ENCODE measurements at regions of chrX and their contacts with region 1.

Region 1: GRCh38 chrX:134369576-134369975 is 90.4 kb upstream of the HPRT1 start:
- DNase-seq: no peak
- ATAC-seq: peak; percentile 51
- H3K4me3 Mint-ChIP-seq: no peak overlapping the region
- H3K27ac Mint-ChIP-seq: peak overlapping the region; percentile 71
- H3K4me1 Mint-ChIP-seq: peaks cover 34% of the 10 kb centered on the region
- H3K27me3 Mint-ChIP-seq: no peaks in the 10 kb centered on the region
- CTCF ChIP-seq: no peak

Region 2: DNA sequence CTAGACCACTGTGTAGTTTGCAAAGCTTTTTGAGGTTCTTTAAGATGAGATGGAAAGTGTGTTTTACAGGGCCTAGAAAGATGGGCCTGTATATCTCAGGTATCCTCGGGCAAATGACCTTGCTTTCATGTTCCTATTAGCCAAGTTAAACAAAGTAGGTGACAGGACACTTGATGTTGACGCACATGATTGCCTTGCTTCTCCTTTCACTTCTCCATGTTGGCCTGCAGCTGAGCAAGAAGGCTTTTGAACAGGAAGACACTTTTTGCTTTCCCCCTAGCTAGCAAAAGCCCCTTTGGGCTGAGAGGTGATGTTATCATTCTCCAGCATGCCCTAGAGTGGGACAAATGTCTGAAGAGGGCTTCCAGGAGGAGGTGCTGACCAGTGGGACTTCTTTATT is 586.3 kb before region 1 on chrX:
- CTCF ChIA-PET with region 1: no interaction called
- POLR2A ChIA-PET with region 1: no interaction called
- intact Hi-C with region 1: loop called (anchors 1 kb)
- DNase-seq: no peak
- ATAC-seq: peak; percentile 88
- H3K4me3 Mint-ChIP-seq: peak overlapping the region; percentile 42
- H3K27ac Mint-ChIP-seq: peak overlapping the region; percentile 89
- H3K4me1 Mint-ChIP-seq: peaks cover 50% of the 10 kb centered on the region
- H3K27me3 Mint-ChIP-seq: no peaks in the 10 kb centered on the region
- CTCF ChIP-seq: no peak

Region 3: GRCh38 chrX:134718105-134718965 is 348.8 kb after region 1 on chrX:
- CTCF ChIA-PET with region 1: no interaction called
- POLR2A ChIA-PET with region 1: no interaction called
- intact Hi-C with region 1: no loop called
- DNase-seq: no peak
- ATAC-seq: no peak
- H3K4me3 Mint-ChIP-seq: no peak overlapping the region
- H3K27ac Mint-ChIP-seq: no peak overlapping the region
- H3K4me1 Mint-ChIP-seq: peaks cover 3% of the 10 kb centered on the region
- H3K27me3 Mint-ChIP-seq: no peaks in the 10 kb centered on the region
- CTCF ChIP-seq: no peak

Measured in activated B cell treated with CpG ODN at 0.5 μM for 24 hours (primary cell).